AG04449 (cell line): ENCODE measurements at regions of chr1 and their contacts with region 1.

Region 1: DNA sequence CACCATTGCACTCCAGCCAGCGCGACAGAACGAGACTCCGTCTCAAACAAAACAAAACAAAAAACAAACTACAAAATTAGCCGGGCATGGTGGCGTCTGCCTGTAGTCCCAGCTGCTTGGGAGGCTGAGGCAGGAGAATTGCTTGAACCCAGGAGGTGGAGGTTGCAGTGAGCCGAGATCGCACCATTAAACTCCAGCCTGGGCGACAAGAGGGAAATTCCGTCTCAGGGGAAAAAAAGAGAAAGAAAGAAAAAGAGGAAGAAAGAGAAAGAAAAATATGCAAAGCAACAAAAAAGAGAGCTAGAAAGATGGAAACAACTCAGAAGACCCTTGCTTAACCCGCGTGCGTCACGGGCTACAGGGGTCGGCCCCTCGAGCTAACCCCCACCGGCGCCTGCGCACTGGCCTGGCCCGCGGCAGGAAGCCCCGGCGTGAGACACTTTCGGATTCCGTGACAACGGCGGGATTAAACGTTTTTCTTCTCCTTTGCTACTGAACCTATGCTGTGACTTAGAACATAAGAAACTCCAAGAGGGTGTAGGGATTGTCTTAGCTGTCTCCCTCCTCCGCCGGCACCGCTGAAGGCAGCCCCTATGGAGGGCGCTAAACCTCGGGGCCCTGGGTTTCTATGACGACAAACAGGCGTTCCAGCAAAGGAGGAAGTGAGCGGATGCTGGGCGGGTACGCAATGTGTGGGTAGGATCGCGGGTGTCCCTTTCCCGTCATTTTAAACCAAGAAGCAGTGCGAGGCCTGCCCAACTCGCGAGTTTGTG is at the start of gene AXDND1:
- DNase-seq: no peak
- H3K4me3 ChIP-seq: peak within 1 kb of the TSS; percentile 84
- CTCF ChIP-seq: no peak

Region 2: GRCh38 chr1:179142889-179143299 is 222.6 kb before region 1 on chr1:
- CTCF ChIA-PET with region 1: no interaction called
- POLR2A ChIA-PET with region 1: no interaction called
- DNase-seq: peak; percentile 92
- H3K4me3 ChIP-seq: peak overlapping the region; percentile 64
- CTCF ChIP-seq: no peak

Region 3: GRCh38 chr1:179264506-179264905 is 101.0 kb before region 1 on chr1:
- CTCF ChIA-PET with region 1: no interaction called
- POLR2A ChIA-PET with region 1: no interaction called
- DNase-seq: no peak
- H3K4me3 ChIP-seq: no peak overlapping the region
- CTCF ChIP-seq: no peak

Region 4: GRCh38 chr1:179353546-179353945 is 12.0 kb before region 1 on chr1:
- CTCF ChIA-PET with region 1: interaction called, 11 read pairs
- POLR2A ChIA-PET with region 1: no interaction called
- DNase-seq: peak; percentile 23
- H3K4me3 ChIP-seq: no peak overlapping the region
- CTCF ChIP-seq: no peak

Region 5: GRCh38 chr1:179493323-179493722 is 127.8 kb after region 1 on chr1:
- CTCF ChIA-PET with region 1: no interaction called
- POLR2A ChIA-PET with region 1: no interaction called
- DNase-seq: peak; percentile 7
- H3K4me3 ChIP-seq: no peak overlapping the region
- CTCF ChIP-seq: no peak

Region 6: DNA sequence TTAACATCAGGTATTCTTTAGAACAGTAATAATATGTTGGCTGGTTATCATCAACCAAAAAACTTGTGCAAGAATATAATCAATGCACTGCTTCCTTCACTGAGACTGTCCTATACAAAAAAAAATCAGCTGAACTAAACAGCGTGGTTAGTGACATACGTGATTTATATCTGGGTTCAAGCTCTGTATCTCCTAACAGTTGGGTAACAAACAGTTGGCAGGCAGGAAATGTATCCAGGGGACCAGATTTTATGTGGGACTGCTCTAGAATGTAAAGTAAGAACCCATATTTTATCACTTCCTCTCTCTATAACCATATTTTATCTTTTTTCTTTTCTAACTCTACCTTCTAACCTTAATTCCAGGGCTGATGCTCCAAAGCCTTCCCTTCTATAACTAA is 1128.9 kb after region 1 on chr1:
- CTCF ChIA-PET with region 1: no interaction called
- POLR2A ChIA-PET with region 1: no interaction called
- DNase-seq: no peak
- H3K4me3 ChIP-seq: no peak overlapping the region
- CTCF ChIP-seq: no peak